Calu3 (cell line): ENCODE measurements at regions of chr5 and their contacts with region 1.

Region 1: DNA sequence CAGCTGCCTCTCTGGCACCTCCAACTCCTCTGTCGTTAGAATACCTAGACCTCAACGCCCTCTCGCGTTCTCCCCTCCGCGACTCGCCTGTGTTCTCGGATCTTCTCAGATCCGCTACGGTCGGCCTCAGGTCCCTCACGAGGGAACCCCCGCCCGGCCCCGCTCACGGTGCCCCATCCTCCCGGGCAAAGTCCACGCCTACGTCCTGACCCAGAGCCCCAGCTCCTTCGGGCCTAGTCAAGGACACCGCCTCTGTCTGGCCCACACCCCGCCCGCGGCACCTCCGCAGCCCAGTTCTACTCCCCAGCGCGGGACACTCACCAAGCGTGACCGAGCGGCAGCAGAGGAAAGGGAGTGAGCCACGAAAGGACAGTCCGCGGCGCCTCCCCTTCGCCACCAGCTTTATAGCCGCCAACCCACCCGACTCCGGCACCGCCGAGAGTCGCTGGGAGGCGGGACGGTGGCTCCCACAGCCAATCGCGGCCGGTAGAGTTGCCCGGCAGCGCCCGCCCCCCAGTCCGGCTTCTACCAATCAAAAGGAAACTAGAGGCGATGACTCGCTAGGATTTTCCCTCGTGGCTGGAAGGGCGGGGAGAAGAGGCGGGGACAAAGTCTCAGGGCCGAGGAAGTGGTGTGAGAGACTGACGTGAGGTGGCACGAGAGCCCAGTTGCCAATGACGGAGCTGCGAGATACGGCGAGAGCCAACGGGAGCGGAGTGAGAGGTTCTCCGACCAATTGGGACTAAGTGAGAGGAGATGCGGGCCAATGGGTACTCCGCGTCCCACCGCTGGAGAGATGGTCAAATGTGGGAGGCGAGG is at the start of gene HMGCS1:
- DNase-seq: peak; percentile 99
- H3K4me3 Mint-ChIP-seq: peak within 1 kb of the TSS; percentile 99
- H3K27ac Mint-ChIP-seq: peak within 1 kb of the TSS; percentile 98
- H3K4me1 Mint-ChIP-seq: peaks cover 31% of the 10 kb centered on the region
- H3K27me3 Mint-ChIP-seq: no peaks in the 10 kb centered on the region
- CTCF ChIP-seq: no peak
- total RNA-seq, gene HMGCS1: 249 and 263 TPM in 2 replicates

Region 2: GRCh38 chr5:43367909-43368648 is 54.8 kb after region 1 on chr5:
- CTCF ChIA-PET with region 1: interaction called, 5 read pairs
- intact Hi-C with region 1: loop called (anchors 2 kb)
- DNase-seq: peak; percentile 46
- H3K4me3 Mint-ChIP-seq: peak overlapping the region; percentile 56
- H3K27ac Mint-ChIP-seq: peak overlapping the region; percentile 95
- H3K4me1 Mint-ChIP-seq: peaks cover 52% of the 10 kb centered on the region
- H3K27me3 Mint-ChIP-seq: no peaks in the 10 kb centered on the region
- CTCF ChIP-seq: no peak